ENCODE measurements at regions of chr3 and their contacts with region 1.

Region 1: GRCh38 chr3:133384331-133385027 is 15.4 kb upstream of the BFSP2 start:
- DNase-seq: peak; percentile 25
- H3K4me3 ChIP-seq: no peak overlapping the region
- H3K27ac ChIP-seq: no peak overlapping the region
- H3K4me1 ChIP-seq: no peaks in the 10 kb centered on the region
- H3K27me3 ChIP-seq: no peaks in the 10 kb centered on the region
- CTCF ChIP-seq: peak; percentile 43 to 53 (median 46)
- EP300 ChIP-seq: no peak
- POLR2A ChIP-seq: no peak

Region 2: DNA sequence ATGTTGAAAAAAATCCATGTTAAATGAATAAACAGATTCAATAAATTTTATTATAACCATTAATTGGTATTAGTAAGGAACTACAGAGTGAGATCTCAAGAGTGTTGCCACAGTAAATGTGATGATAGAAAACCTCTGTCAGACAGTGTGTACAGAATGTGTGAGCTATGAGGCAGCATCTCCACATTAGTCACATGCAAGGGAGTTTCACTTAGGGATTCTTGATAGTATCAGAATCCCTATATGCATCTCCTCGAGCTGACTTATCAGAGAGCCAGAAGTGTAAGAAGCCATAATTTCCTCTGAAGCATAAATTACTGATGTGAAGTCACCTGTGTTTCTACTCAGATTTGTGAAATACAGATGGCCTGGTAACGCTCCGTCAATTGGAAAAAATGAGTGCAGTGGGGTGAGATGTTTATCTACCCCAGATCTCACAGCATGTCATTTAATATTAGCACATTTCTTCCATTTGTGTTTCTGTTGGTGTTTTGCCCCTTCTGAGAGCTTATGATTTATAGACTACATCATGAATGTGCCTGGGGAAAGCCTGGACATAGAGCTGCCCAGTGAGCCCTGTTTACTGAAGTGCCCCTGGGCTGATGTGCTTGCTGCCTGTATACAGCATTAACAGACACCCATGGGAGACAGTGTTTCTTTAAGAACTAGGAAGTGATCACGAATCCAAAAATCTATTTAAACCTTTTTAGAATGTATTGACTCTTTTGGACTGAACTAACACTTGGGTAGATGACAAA is 1612.0 kb before region 1 on chr3:
- in situ Hi-C with region 1: no loop called
- intact Hi-C with region 1: no loop called
- DNase-seq: no peak
- H3K4me3 ChIP-seq: no peak overlapping the region
- H3K27ac ChIP-seq: no peak overlapping the region
- H3K4me1 ChIP-seq: no peaks in the 10 kb centered on the region
- H3K27me3 ChIP-seq: no peaks in the 10 kb centered on the region
- CTCF ChIP-seq: no peak
- EP300 ChIP-seq: no peak
- POLR2A ChIP-seq: no peak

Region 3: GRCh38 chr3:133040696-133041523 is 343.6 kb before region 1 on chr3:
- in situ Hi-C with region 1: loop called in 3 of 4 experiments (anchors 25 kb)
- intact Hi-C with region 1: no loop called
- DNase-seq: peak; percentile 61
- H3K4me3 ChIP-seq: no peak overlapping the region
- H3K27ac ChIP-seq: no peak overlapping the region
- H3K4me1 ChIP-seq: peaks cover 0 to 9% (median 7%) of the 10 kb centered on the region in 4 donors
- H3K27me3 ChIP-seq: peaks cover 35% of the 10 kb centered on the region
- CTCF ChIP-seq: peak; percentile 43 to 64 (median 55)
- EP300 ChIP-seq: no peak
- POLR2A ChIP-seq: no peak

Measured in transverse colon (tissue), 4 donors.